HCT116 (cell line): ENCODE measurements at regions of chr5 and their contacts with region 1.

Region 1: DNA sequence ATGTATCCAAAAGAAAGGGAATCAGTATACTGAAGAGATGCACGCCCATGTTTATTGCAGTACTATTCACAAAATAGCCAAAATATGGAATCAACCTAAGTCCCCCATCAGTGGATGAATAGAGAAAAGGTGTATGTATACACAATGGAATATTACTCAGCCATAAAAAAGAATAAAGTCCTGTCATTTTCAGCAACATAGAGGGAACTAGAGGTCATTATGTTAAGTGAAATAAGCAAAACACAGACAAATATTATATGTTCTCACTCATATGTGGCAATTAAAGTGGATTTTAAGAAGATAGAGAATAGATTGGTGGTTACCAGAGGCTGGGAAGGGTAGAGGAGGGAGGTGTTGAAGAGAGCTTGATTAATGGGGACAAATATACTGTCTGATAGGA is 88.6 kb downstream of the NIPBL start:
- DNase-seq: no peak
- ATAC-seq: no peak
- H3K4me3 ChIP-seq: no peak overlapping the region
- H3K27ac ChIP-seq: no peak overlapping the region
- H3K4me1 ChIP-seq: no peaks in the 10 kb centered on the region
- H3K27me3 ChIP-seq: no peaks in the 10 kb centered on the region
- CTCF ChIP-seq: no peak
- POLR2A ChIP-seq: no peak
- RAD21 ChIP-seq: no peak

Region 2: GRCh38 chr5:37034955-37035354 is 69.8 kb after region 1 on chr5:
- CTCF ChIA-PET with region 1: no interaction called
- POLR2A ChIA-PET with region 1: no interaction called
- RAD21 ChIA-PET with region 1: no interaction called
- intact Hi-C with region 1: loop called (anchors 5 kb)
- DNase-seq: no peak
- ATAC-seq: no peak
- H3K4me3 ChIP-seq: no peak overlapping the region
- H3K27ac ChIP-seq: no peak overlapping the region
- H3K4me1 ChIP-seq: no peaks in the 10 kb centered on the region
- H3K27me3 ChIP-seq: no peaks in the 10 kb centered on the region
- CTCF ChIP-seq: no peak
- POLR2A ChIP-seq: no peak
- RAD21 ChIP-seq: no peak